ENCODE measurements at regions of chr10 and their contacts with region 1.

Region 1: DNA sequence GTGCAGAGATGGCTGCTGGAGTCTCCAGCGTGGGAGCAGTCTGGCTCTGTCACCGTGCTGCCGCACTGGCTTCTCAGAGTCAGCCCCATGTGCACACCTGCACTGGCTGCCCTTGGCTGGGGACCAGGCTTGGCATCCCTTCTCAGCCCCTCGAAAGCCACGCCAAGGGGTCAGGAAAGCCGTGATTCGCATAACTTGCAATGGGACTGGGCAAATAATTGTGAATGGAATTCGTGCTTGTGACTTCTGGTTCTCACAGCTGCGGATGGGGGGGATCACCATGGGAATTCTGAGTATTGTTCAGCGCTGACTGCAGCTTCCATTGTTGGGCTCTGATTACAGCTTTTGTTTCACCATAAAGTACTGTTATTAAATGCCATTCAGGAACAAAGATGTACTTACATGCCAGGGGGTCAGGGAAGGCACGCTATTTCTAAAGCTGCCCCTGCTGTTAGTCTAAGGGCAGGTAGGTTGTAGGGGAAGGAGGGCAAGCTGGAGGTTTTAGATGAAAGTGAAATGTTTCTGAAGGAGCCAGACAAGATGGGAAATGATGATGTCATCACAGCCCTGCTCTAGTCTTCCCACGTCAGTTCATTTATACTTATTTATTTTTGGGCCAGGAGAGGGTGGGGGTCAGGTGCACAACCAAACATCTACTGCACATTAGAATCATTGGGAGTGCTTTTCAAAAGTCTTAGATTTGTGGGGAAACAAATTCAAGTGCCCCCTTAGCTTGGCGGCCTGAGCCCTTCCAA is 5.8 kb upstream of the PLEKHA1 start:
- DNase-seq: no peak
- ATAC-seq: no peak
- H3K4me3 Mint-ChIP-seq: no peak overlapping the region
- H3K27ac Mint-ChIP-seq: no peak overlapping the region
- H3K4me1 Mint-ChIP-seq: peaks cover 5% of the 10 kb centered on the region
- H3K27me3 Mint-ChIP-seq: peaks cover 10% of the 10 kb centered on the region

Region 2: DNA sequence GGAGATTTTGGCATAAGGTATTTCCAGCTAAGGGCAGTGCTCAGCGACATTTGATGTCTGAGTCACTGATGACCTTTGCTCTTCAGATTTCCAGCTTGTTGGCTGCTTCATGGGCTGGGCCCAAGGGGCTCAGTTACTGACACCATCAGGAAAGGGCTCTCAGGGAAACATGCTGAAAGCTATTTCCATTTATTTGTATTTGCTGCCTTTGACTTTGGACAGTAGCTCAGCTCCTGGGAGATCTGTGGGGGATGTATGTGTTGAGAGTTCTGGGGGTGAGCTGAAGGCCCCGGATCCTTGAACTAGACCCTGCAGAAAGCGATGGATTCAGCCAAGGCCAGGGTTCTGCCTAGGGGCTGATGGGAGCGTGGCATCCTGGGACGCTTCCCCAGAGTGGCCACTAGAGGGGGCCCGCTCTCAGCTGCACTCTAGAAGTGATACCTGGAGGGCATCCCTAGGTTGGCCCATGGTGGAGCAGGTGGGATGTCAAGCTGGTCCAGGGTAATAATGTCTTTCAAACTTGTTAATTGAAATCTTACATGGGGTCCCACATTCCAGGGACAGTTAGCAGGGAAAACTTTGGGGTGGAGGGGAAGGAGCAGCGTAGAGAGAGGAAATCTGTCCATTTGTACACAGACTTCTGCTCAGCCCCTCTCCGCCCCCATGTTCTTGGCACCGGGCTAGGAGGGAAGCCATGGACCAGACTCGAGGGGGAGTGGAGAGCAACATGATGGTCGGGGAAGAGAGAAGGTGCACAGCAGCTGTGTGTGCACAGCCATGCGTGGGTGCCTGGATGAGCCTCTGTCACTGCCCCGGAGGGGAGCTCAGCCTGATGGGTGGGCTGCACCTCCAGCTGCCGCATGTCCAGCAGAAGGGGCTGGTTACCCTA is 100.6 kb before region 1 on chr10:
- CTCF ChIA-PET with region 1: no interaction called
- POLR2A ChIA-PET with region 1: no interaction called
- intact Hi-C with region 1: no loop called
- DNase-seq: peak; percentile 74
- ATAC-seq: peak; percentile 91
- H3K4me3 Mint-ChIP-seq: no peak overlapping the region
- H3K27ac Mint-ChIP-seq: no peak overlapping the region
- H3K4me1 Mint-ChIP-seq: no peaks in the 10 kb centered on the region
- H3K27me3 Mint-ChIP-seq: peaks cover 15% of the 10 kb centered on the region

Region 3: DNA sequence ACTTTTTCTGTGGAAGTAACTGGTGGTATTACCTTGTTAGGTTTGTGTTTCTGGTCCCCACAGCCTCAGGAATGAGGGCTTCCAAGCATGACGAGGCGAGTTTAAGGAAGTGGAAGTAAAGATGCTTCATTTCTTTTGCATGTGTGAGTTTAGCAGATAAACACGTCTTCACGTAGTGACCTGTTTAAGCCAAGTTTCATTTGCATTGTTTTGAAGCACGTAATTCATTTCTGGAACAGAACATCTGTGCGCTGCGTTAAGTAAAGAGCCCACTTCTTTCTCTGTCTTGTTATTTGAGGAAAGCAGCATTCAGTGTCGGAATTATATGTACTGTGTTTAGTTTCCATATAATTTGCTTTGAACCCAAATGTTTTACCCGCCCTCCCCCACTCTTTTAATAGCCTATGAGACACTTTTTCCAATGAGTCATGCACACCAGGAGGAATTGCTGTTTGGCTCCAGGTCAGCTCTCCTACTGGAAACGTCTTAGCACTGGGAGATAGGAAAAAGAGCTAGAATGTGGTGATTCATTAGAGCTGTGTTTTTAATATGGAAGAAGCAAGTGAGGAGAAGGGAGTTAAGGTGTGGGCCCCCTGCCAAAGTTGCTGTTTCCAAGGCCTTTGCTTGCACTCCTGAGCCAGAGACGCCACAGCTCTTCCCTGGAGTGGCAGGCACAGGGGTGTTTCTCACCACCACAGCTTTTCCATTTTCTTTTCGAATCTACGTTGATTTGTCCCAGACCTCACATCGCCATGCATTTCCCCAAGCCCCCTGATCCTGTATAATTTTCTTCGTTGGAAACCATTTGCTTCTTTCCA is 60.8 kb before region 1 on chr10:
- CTCF ChIA-PET with region 1: no interaction called
- POLR2A ChIA-PET with region 1: no interaction called
- intact Hi-C with region 1: no loop called
- DNase-seq: no peak
- ATAC-seq: no peak
- H3K4me3 Mint-ChIP-seq: no peak overlapping the region
- H3K27ac Mint-ChIP-seq: no peak overlapping the region
- H3K4me1 Mint-ChIP-seq: no peaks in the 10 kb centered on the region
- H3K27me3 Mint-ChIP-seq: peaks cover 9% of the 10 kb centered on the region

Region 4: GRCh38 chr10:122381680-122382079 is 13.0 kb after region 1 on chr10:
- CTCF ChIA-PET with region 1: no interaction called
- POLR2A ChIA-PET with region 1: no interaction called
- intact Hi-C with region 1: loop called in 1 of 2 experiments (anchors 1 kb)
- DNase-seq: no peak
- ATAC-seq: no peak
- H3K4me3 Mint-ChIP-seq: no peak overlapping the region
- H3K27ac Mint-ChIP-seq: no peak overlapping the region
- H3K4me1 Mint-ChIP-seq: peaks cover 58% of the 10 kb centered on the region
- H3K27me3 Mint-ChIP-seq: no peaks in the 10 kb centered on the region

Region 5: DNA sequence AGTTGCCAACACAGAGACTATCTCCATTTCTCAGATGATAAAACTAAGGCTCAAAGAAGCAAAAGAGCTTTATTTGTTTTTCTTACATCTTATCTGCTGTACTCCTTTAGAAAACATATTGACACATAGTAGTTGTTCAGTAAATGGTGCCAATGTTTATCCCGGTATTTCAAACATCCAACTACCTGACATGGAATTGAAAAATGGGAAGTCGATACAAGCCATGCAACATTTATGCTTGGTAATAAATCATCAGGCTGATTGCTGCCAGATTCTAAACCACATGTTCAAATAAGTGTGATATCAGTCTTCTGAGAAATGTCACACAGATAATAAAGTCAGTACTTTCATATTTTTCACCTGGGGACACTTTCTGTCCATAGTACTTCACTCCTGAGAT is 396.7 kb after region 1 on chr10:
- CTCF ChIA-PET with region 1: no interaction called
- POLR2A ChIA-PET with region 1: no interaction called
- intact Hi-C with region 1: no loop called
- DNase-seq: no peak
- ATAC-seq: no peak
- H3K4me3 Mint-ChIP-seq: no peak overlapping the region
- H3K27ac Mint-ChIP-seq: no peak overlapping the region
- H3K4me1 Mint-ChIP-seq: no peaks in the 10 kb centered on the region
- H3K27me3 Mint-ChIP-seq: peaks cover 16% of the 10 kb centered on the region

Measured in activated CD4-positive, alpha-beta T cell treated with anti-CD3 and anti-CD28 coated beads for 36 hours (primary cell).